ENCODE measurements at regions of chr17 and their contacts with region 1.

Region 1: DNA sequence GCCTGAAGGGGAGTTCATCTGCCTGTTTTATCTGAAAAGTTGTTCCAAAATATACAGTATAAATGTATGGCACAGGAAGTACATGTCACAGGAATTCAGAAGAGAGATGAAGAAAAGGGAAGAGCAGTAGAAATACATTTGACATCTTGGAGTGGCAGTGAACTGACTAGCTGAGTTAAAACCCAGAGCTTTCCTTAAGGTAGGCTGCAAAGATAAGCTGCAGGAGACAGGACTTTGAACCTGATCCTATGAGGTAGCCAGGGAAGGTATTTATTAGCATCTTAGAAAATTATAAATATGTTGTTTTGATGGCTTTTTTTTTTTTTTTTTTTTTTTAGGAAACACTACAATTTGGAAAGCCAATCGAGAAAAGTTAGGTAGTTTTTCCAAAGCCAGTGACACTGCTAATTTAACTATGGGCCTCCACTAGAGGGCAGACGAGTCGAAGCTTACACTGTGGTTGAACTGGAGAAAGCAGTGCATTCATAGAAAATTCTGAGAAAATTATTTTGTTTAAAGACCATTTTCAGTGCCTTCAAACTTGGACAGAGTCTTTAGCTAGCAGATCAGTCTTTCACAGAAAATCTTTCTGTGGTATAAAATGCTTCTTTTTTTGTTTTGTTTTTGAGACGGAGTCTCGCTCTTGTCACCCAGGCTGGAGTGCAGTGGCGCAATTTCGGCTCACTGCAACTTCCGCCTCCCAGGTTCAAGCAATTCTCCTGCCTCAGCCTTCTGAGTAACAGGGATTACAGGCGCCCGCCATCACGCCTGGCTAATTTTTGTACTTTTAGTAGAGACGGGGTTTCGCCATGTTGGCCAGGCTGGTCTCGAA is 122.3 kb downstream of the SSH2 start:
- DNase-seq: peak; percentile 30
- ATAC-seq: peak; percentile 86
- H3K4me3 ChIP-seq: no peak overlapping the region
- H3K27ac ChIP-seq: no peak overlapping the region
- H3K4me1 ChIP-seq: peaks cover 9% of the 10 kb centered on the region
- H3K27me3 ChIP-seq: no peaks in the 10 kb centered on the region
- CTCF ChIP-seq: peak; percentile 80; the same call in 1 of the 2 replicates

Region 2: DNA sequence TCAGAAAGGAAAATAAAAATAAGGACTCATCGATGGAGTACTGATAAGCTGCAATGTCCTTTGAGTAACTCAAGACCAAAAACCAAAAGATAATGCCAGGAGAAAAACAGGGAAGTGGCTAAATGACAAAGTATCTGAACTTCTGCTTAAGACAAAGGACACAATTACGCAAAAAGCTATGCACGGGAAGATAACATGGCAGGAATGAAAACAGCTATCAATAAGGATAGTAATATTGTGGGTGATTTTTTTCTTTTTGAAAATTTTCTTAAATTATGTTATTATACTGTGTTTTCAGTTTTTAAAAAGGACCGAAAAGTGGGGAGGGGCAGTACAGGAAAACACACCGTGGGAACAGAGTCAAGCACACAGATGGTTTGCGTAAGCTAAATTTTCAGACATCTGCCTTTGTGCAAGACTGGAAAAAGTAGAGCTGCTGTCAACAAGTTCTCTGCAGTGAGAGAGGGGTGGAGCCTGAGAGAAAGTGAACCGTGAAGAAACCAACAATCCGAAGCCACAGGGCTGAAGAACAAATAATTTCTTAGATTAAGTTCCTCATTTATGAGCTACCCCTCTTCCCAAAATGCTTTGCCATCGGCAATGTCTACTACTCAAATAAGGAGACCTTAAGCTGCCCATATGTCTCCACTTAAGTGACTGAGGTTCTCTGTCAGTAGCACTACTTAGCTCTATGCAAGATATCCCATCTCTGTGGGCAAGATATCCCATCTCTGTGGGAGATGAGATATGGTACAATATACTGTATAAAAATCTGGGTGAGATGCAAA is 85.1 kb before region 1 on chr17:
- CTCF ChIA-PET with region 1: no interaction called
- POLR2A ChIA-PET with region 1: interaction called, 10 read pairs
- in situ Hi-C with region 1: no loop called
- intact Hi-C with region 1: no loop called
- DNase-seq: no peak
- ATAC-seq: no peak
- H3K4me3 ChIP-seq: no peak overlapping the region
- H3K27ac ChIP-seq: no peak overlapping the region
- H3K4me1 ChIP-seq: no peaks in the 10 kb centered on the region
- H3K27me3 ChIP-seq: no peaks in the 10 kb centered on the region
- CTCF ChIP-seq: no peak

Region 3: GRCh38 chr17:29821897-29822296 is 14.2 kb after region 1 on chr17:
- CTCF ChIA-PET with region 1: interaction called, 14 read pairs
- POLR2A ChIA-PET with region 1: interaction called, 17 read pairs
- in situ Hi-C with region 1: no loop called
- intact Hi-C with region 1: no loop called
- DNase-seq: no peak
- ATAC-seq: no peak
- H3K4me3 ChIP-seq: no peak overlapping the region
- H3K27ac ChIP-seq: no peak overlapping the region
- H3K4me1 ChIP-seq: no peaks in the 10 kb centered on the region
- H3K27me3 ChIP-seq: no peaks in the 10 kb centered on the region
- CTCF ChIP-seq: no peak

Region 4: DNA sequence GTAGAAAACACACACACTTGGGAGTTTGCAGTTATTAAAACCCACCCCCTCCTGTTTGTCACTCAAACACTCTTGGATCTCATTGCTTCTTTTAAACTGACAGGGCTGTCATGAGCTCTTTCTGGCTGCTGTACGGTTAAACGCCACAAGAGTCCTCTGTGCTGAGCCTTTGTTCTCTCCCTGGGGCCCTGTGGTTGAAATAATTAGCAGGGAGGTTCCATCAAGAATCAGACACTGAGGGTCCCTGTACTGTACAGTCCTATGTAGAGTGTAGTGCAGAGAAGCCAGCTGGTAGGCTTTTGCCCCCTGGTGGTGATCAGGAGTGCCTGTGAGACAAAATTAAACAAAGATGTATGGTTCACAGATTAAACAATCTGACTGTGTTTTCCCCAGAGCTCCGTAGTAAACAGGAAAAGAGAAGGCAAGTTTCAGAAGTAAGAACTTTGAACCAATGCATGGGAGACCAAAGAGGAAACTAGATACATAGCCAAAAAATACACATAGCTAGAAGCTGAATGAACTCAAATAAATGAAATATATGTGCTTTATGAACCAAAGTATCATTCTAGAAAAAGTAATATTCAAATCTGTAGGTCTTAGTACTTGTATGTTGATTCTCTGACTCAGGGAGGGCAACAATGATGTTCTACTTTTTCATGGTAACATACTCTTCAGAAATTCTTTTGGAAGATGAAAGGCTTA is 123.6 kb after region 1 on chr17:
- CTCF ChIA-PET with region 1: interaction called, 75 read pairs
- POLR2A ChIA-PET with region 1: no interaction called
- in situ Hi-C with region 1: no loop called
- intact Hi-C with region 1: loop called (anchors 1 kb)
- DNase-seq: peak; percentile 64
- ATAC-seq: peak; percentile 69
- H3K4me3 ChIP-seq: peak overlapping the region; percentile 87 to 95
- H3K27ac ChIP-seq: peak overlapping the region; percentile 92
- H3K4me1 ChIP-seq: peaks cover 41% of the 10 kb centered on the region
- H3K27me3 ChIP-seq: no peaks in the 10 kb centered on the region
- CTCF ChIP-seq: peak; percentile 93

Region 5: GRCh38 chr17:30000001-30000754 is 192.4 kb after region 1 on chr17:
- CTCF ChIA-PET with region 1: interaction called, 6 read pairs
- POLR2A ChIA-PET with region 1: no interaction called
- in situ Hi-C with region 1: no loop called
- intact Hi-C with region 1: loop called (anchors 10 kb)
- DNase-seq: no peak
- ATAC-seq: peak; percentile 65
- H3K4me3 ChIP-seq: no peak overlapping the region
- H3K27ac ChIP-seq: no peak overlapping the region
- H3K4me1 ChIP-seq: peaks cover 13% of the 10 kb centered on the region
- H3K27me3 ChIP-seq: no peaks in the 10 kb centered on the region; the same call in 1 of the 2 replicates
- CTCF ChIP-seq: peak; percentile 29; the same call in 1 of the 2 replicates

Region 6: GRCh38 chr17:30074730-30075129 is 267.0 kb after region 1 on chr17:
- CTCF ChIA-PET with region 1: interaction called, 10 read pairs
- POLR2A ChIA-PET with region 1: no interaction called
- in situ Hi-C with region 1: no loop called
- intact Hi-C with region 1: no loop called
- DNase-seq: no peak
- ATAC-seq: no peak
- H3K4me3 ChIP-seq: no peak overlapping the region
- H3K27ac ChIP-seq: no peak overlapping the region
- H3K4me1 ChIP-seq: no peaks in the 10 kb centered on the region
- H3K27me3 ChIP-seq: peaks cover 12% of the 10 kb centered on the region; the same call in 1 of the 2 replicates
- CTCF ChIP-seq: no peak

Region 7: DNA sequence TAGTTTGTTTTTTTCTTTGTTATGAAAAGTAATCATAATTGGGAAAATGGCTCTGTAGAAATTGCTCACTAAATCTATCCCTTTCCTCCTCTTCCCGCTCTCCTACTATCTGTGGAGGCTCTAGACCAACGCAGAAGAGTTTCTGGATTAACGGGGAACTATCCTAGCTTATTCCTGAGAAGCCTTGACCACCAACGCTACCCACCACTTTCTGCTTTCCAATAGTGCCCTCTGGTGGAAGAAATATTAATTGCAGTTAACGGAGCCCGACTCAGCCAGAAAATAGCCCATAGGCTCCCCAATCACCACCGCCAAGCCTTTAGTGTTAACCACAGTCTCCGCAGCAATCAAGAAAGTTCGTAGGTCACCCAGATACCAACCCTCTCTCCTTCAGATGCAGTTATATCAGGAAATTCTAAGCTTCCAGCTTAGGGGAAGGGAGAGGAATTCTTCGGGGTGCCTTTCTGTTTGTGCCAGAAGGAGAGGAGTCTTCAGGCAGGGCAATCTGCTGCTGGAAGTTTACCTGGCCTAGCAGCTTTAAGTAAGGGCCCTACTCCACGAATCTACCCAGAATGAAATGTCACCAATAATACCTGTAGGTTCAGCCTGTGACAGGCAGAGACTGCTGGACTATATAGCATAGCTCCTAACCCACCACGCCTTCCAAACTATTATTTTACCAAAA is 285.9 kb after region 1 on chr17:
- CTCF ChIA-PET with region 1: interaction called, 11 read pairs
- POLR2A ChIA-PET with region 1: no interaction called
- in situ Hi-C with region 1: no loop called
- intact Hi-C with region 1: loop called (anchors 10 kb)
- DNase-seq: peak; percentile 42
- ATAC-seq: peak; percentile 92
- H3K4me3 ChIP-seq: no peak overlapping the region
- H3K27ac ChIP-seq: no peak overlapping the region
- H3K4me1 ChIP-seq: peaks cover 3% of the 10 kb centered on the region; the same call in 1 of the 2 replicates
- H3K27me3 ChIP-seq: no peaks in the 10 kb centered on the region
- CTCF ChIP-seq: peak; percentile 84

Measured in Panc1 (cell line).